Spleen (tissue), 13 donors: ENCODE measurements at regions of chr17 and their contacts with region 1.

Region 1: GRCh38 chr17:70144260-70144846 is 25.0 kb upstream of the KCNJ2 start:
- DNase-seq: no peak
- H3K4me3 ChIP-seq: no peak overlapping the region
- H3K27ac ChIP-seq: no peak overlapping the region
- H3K4me1 ChIP-seq: peaks cover 0 to 6% (median 2%) of the 10 kb centered on the region in 6 donors
- H3K27me3 ChIP-seq: no peaks in the 10 kb centered on the region
- CTCF ChIP-seq: peak in 10 of 11 experiments; percentile 21 to 67 (median 64)
- POLR2A ChIP-seq: no peak

Region 2: GRCh38 chr17:69575346-69575761 is 569.0 kb before region 1 on chr17:
- intact Hi-C with region 1: loop called (anchors 10 kb)
- DNase-seq: no peak
- H3K4me3 ChIP-seq: no peak overlapping the region
- H3K27ac ChIP-seq: peak overlapping the region in 6 of 8 donors; percentile 7 to 67 (median 54)
- H3K4me1 ChIP-seq: peaks cover 6 to 27% (median 13%) of the 10 kb centered on the region in 6 donors
- H3K27me3 ChIP-seq: no peaks in the 10 kb centered on the region
- CTCF ChIP-seq: no peak
- POLR2A ChIP-seq: no peak

Region 3: GRCh38 chr17:69607162-69607834 is 537.1 kb before region 1 on chr17:
- intact Hi-C with region 1: loop called (anchors 10 kb)
- DNase-seq: peak; percentile 79
- H3K4me3 ChIP-seq: no peak overlapping the region
- H3K27ac ChIP-seq: peak overlapping the region in 3 of 8 donors; percentile 16 to 21 (median 20)
- H3K4me1 ChIP-seq: peaks cover 0 to 28% (median 12%) of the 10 kb centered on the region in 6 donors
- H3K27me3 ChIP-seq: no peaks in the 10 kb centered on the region
- CTCF ChIP-seq: peak in 10 of 11 experiments; percentile 44 to 75 (median 62)
- POLR2A ChIP-seq: no peak

Region 4: GRCh38 chr17:70060415-70060814 is 83.9 kb before region 1 on chr17:
- intact Hi-C with region 1: loop called (anchors 10 kb)
- DNase-seq: no peak
- H3K4me3 ChIP-seq: no peak overlapping the region
- H3K27ac ChIP-seq: no peak overlapping the region
- H3K4me1 ChIP-seq: peaks cover 0 to 4% (median 0%) of the 10 kb centered on the region in 6 donors
- H3K27me3 ChIP-seq: no peaks in the 10 kb centered on the region
- CTCF ChIP-seq: no peak
- POLR2A ChIP-seq: no peak